ENCODE measurements at regions of chr10 and their contacts with region 1.

Region 1: GRCh38 chr10:119270762-119271366 is 63.5 kb downstream of the GRK5 start:
- DNase-seq: peak; percentile 70 to 83 (median 82)
- H3K4me3 ChIP-seq: peak overlapping the region in 1 of 3 experiments; percentile 52
- H3K4me3 Mint-ChIP-seq: peak overlapping the region; percentile 67 to 90
- H3K27ac ChIP-seq: peak overlapping the region; percentile 68 to 90
- H3K27ac Mint-ChIP-seq: peak overlapping the region; percentile 95 to 99 (median 99)
- H3K4me1 ChIP-seq: peaks cover 24 to 28% of the 10 kb centered on the region in 2 donors
- H3K4me1 Mint-ChIP-seq: peaks cover 40% of the 10 kb centered on the region
- H3K27me3 ChIP-seq: no peaks in the 10 kb centered on the region
- H3K27me3 Mint-ChIP-seq: peaks cover 0 to 9% (median 8%) of the 10 kb centered on the region in 3 donors
- CTCF ChIP-seq: no peak

Region 2: DNA sequence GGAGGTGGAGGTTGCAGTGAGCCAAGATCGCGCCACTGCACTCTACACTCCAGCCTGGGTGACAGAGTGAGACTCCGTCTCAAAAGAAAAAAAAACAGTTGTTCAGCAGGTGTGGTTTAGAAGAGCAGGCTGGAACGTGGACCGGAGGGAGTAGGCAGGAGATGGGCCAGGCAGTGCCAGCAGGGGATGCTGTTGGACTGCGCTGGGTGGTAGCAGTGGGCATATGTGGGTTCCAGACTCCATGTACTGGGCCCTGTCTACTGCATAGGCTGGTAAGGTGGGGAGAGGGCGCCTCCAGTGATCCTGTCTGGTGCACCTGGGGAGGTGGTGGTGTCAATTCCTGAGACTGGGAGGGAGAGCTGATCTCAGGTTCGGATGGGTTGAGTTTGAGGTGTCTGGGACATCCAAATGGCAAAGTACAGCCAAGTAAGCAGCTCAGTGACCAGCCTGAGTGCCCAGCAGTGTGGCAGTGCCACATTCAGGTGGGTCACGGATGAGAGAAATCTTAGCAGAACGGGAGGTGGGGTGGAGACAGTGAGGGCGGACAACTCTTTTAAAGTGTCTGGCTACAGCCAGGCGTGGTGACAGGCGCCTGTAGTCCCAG is 131.3 kb before region 1 on chr10:
- intact Hi-C with region 1: loop called in 1 of 2 experiments (anchors 5 kb)
- DNase-seq: peak; percentile 29 to 50 (median 48)
- H3K4me3 ChIP-seq: no peak overlapping the region
- H3K4me3 Mint-ChIP-seq: no peak overlapping the region
- H3K27ac ChIP-seq: peak overlapping the region; percentile 44 to 66
- H3K27ac Mint-ChIP-seq: peak overlapping the region in 5 of 7 donors; percentile 75 to 91 (median 88)
- H3K4me1 ChIP-seq: peaks cover 37 to 38% of the 10 kb centered on the region in 2 donors
- H3K4me1 Mint-ChIP-seq: peaks cover 34% of the 10 kb centered on the region
- H3K27me3 ChIP-seq: no peaks in the 10 kb centered on the region
- H3K27me3 Mint-ChIP-seq: peaks cover 0 to 3% (median 0%) of the 10 kb centered on the region in 3 donors
- CTCF ChIP-seq: peak; percentile 78

Region 3: DNA sequence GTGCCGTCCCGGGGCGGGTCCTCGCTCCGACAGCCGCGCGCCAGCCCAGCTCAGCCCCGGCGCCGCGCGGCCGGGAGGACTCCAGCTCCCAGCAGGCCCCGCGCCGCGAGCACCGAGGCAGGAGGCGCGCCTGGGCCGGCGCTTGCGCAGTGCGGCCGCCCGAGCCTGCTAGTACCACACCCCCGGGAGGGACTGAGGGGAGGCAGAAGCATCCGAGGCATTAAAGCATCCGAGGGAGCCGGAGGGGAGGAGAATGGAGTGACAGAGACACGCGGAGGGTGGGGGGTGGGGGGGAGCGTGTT is 63.5 kb before region 1 on chr10 and contains the start of gene GRK5:
- intact Hi-C with region 1: loop called in 1 of 2 experiments (anchors 2 kb)
- DNase-seq: peak; percentile 91 to 93 (median 92)
- H3K4me3 ChIP-seq: peak within 1 kb of the TSS; percentile 48 to 85 (median 80)
- H3K4me3 Mint-ChIP-seq: peak within 1 kb of the TSS; percentile 96 to 97
- H3K27ac ChIP-seq: peak within 1 kb of the TSS; percentile 73 to 86
- H3K27ac Mint-ChIP-seq: peak within 1 kb of the TSS; percentile 90 to 98 (median 97)
- H3K4me1 ChIP-seq: peaks cover 33 to 44% of the 10 kb centered on the region in 2 donors
- H3K4me1 Mint-ChIP-seq: peaks cover 41% of the 10 kb centered on the region
- H3K27me3 ChIP-seq: no peaks in the 10 kb centered on the region
- H3K27me3 Mint-ChIP-seq: peaks cover 3 to 16% (median 16%) of the 10 kb centered on the region in 3 donors
- CTCF ChIP-seq: no peak
- polyA plus RNA-seq, gene GRK5: 1.2 to 6.5 (median 2.8) TPM

Region 4: GRCh38 chr10:119222537-119222936 is 48.3 kb before region 1 on chr10:
- intact Hi-C with region 1: no loop called
- DNase-seq: no peak
- H3K4me3 ChIP-seq: no peak overlapping the region
- H3K4me3 Mint-ChIP-seq: peak overlapping the region in 1 of 2 donors; percentile 33
- H3K27ac ChIP-seq: no peak overlapping the region
- H3K27ac Mint-ChIP-seq: no peak overlapping the region
- H3K4me1 ChIP-seq: no peaks in the 10 kb centered on the region
- H3K4me1 Mint-ChIP-seq: peaks cover 15% of the 10 kb centered on the region
- H3K27me3 ChIP-seq: no peaks in the 10 kb centered on the region
- H3K27me3 Mint-ChIP-seq: peaks cover 2 to 4% (median 4%) of the 10 kb centered on the region in 3 donors
- CTCF ChIP-seq: no peak

Region 5: GRCh38 chr10:119409866-119410299 is 139.0 kb after region 1 on chr10:
- intact Hi-C with region 1: loop called in 1 of 2 experiments (anchors 5 kb)
- DNase-seq: no peak
- H3K4me3 ChIP-seq: no peak overlapping the region
- H3K4me3 Mint-ChIP-seq: no peak overlapping the region
- H3K27ac ChIP-seq: no peak overlapping the region
- H3K27ac Mint-ChIP-seq: no peak overlapping the region
- H3K4me1 ChIP-seq: peaks cover 37 to 38% of the 10 kb centered on the region in 2 donors
- H3K4me1 Mint-ChIP-seq: peaks cover 42% of the 10 kb centered on the region
- H3K27me3 ChIP-seq: no peaks in the 10 kb centered on the region
- H3K27me3 Mint-ChIP-seq: peaks cover 0 to 2% (median 0%) of the 10 kb centered on the region in 3 donors
- CTCF ChIP-seq: no peak

Measured in CD14-positive monocyte (primary cell).